B cell (primary cell): ENCODE measurements at regions of chr13 and their contacts with region 1.

Region 1: DNA sequence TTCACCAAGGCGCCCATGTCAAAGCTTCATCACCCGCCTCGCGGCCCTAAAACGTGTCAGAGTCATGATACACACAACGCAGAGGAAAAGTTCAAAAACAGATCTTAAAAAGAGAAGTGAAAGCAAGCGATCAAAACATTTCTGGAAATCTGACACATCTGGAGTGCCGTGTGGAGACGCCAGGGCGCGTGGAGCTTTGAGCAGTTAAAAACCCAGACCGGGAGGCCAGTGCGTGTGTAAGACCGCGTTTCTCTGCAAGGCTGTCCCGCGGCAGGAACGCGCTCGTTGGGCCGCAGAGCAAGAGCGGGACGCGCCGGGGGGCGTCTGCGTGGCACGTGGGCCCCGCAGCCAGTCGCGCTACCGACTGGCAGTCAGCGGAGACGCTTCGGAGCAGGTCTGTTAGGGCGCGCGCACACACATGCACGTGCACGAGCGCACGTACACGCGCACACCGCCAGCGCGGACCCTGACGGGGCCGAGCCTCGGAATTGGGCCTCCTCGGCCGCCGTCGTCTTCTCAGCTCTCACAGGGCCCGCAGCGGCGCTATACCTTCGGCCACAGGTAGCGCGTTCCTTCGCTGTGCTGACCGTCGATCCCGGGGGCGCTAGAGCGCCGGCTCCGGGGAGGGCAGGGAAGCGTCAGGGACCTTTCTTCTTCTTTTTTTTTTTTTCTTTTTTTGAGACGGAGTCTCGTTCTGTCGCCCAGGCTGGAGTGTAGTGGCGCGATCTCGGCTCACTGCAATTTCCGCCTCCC is 35.8 kb downstream of the RNF6 start:
- DNase-seq: peak; percentile 99
- ATAC-seq: peak; percentile 87
- H3K4me3 ChIP-seq: peak overlapping the region; percentile 66 to 91 (median 73)
- H3K4me3 Mint-ChIP-seq: peak overlapping the region; percentile 91
- H3K27ac ChIP-seq: peak overlapping the region; percentile 86 to 88
- H3K27ac Mint-ChIP-seq: peak overlapping the region; percentile 96
- H3K4me1 ChIP-seq: peaks cover 33 to 44% of the 10 kb centered on the region in 2 donors
- H3K4me1 Mint-ChIP-seq: peaks cover 46% of the 10 kb centered on the region
- H3K27me3 ChIP-seq: no peaks in the 10 kb centered on the region
- H3K27me3 Mint-ChIP-seq: no peaks in the 10 kb centered on the region
- CTCF ChIP-seq: peak; percentile 72

Region 2: GRCh38 chr13:25301347-25302047 is 884.8 kb before region 1 on chr13 and contains the start of gene NUP58:
- CTCF ChIA-PET with region 1: no interaction called
- POLR2A ChIA-PET with region 1: no interaction called
- intact Hi-C with region 1: loop called (anchors 5 kb)
- DNase-seq: peak; percentile 97
- ATAC-seq: peak; percentile 99
- H3K4me3 ChIP-seq: peak within 1 kb of the TSS; percentile 69 to 94 (median 86)
- H3K4me3 Mint-ChIP-seq: peak within 1 kb of the TSS; percentile 87
- H3K27ac ChIP-seq: peak within 1 kb of the TSS; percentile 90 to 97
- H3K27ac Mint-ChIP-seq: peak within 1 kb of the TSS; percentile 95
- H3K4me1 ChIP-seq: peaks cover 13 to 17% of the 10 kb centered on the region in 2 donors
- H3K4me1 Mint-ChIP-seq: peaks cover 33% of the 10 kb centered on the region
- H3K27me3 ChIP-seq: peaks cover 0 to 20% (median 15%) of the 10 kb centered on the region in 4 experiments
- H3K27me3 Mint-ChIP-seq: peaks cover 17% of the 10 kb centered on the region
- CTCF ChIP-seq: no peak
- total RNA-seq, gene NUP58: 41.0 and 41.7 TPM in 2 replicates

Region 3: DNA sequence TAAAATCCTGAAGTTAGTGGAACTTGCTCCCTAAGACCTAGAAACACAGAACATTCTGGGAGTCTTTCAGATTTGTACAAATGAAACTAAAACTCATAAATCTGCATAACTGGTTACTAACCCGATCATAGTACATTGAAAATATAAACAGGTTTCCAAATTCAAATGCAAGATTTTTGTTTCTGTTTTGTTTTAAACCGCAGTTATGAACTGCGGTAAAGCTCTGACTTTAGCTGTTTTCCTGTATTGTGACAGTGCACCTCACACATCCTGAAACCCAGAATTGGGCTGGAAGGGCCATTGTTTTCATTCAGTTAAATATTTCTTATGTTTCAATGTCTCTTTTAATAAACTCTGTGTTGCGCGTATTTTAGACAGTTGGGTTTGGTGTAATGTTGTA is 339.1 kb before region 1 on chr13:
- CTCF ChIA-PET with region 1: no interaction called
- POLR2A ChIA-PET with region 1: no interaction called
- intact Hi-C with region 1: no loop called
- DNase-seq: peak; percentile 28
- ATAC-seq: no peak
- H3K4me3 ChIP-seq: no peak overlapping the region
- H3K4me3 Mint-ChIP-seq: no peak overlapping the region
- H3K27ac ChIP-seq: no peak overlapping the region
- H3K27ac Mint-ChIP-seq: no peak overlapping the region
- H3K4me1 ChIP-seq: peaks cover 9 to 26% of the 10 kb centered on the region in 2 donors
- H3K4me1 Mint-ChIP-seq: peaks cover 31% of the 10 kb centered on the region
- H3K27me3 ChIP-seq: peaks cover 0 to 3% (median 0%) of the 10 kb centered on the region in 4 experiments
- H3K27me3 Mint-ChIP-seq: peaks cover under 1% of the 10 kb centered on the region
- CTCF ChIP-seq: no peak

Region 4: DNA sequence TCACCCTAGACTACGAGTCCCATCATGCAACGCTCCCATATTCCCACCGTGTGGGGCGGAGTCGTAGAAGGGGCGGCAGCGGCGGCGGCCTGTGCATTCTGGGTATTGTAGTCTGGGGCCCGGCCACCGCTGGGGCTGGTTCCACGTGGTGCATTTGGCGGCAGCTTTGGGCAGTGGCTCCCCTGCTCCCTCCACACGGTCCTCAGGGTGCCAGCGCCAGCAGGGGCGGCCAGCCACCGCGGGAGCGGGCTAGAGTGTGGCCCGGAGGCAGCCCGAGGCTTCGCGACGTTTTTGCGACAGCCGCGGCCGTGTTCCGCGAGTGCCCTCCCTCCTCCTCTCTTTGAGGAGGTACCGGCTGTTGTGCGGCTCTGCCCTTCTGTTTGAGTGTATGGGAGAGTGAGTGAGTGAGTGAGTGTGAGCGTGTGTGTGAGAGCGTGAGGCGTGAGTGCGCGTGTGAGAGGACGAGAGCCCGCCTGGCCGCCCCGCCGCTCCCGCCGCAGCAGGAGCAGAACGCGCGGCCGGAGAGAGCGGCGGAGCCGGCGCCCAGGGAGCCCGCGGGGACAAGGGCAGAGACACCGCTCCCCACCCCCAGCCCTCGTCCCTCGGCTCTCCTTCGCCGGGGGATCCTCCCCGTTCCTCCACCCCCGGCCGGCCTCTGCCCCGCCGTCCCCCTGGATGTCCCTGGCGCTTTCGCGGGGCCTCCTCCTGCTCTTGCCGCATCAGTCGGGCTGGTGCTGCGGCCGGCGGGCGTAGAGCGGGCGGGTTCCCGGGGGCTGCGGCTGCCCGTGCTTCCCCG is 67.7 kb after region 1 on chr13 and contains the start of gene CDK8:
- CTCF ChIA-PET with region 1: interaction called, 25 read pairs
- POLR2A ChIA-PET with region 1: interaction called, 4 read pairs
- intact Hi-C with region 1: loop called (anchors 1 kb)
- DNase-seq: peak; percentile 97
- ATAC-seq: peak; percentile 86
- H3K4me3 ChIP-seq: peak within 1 kb of the TSS; percentile 66 to 98 (median 77)
- H3K4me3 Mint-ChIP-seq: peak within 1 kb of the TSS; percentile 83
- H3K27ac ChIP-seq: peak within 1 kb of the TSS; percentile 72 to 80
- H3K27ac Mint-ChIP-seq: peak within 1 kb of the TSS; percentile 81
- H3K4me1 ChIP-seq: peaks cover 14 to 17% of the 10 kb centered on the region in 2 donors
- H3K4me1 Mint-ChIP-seq: peaks cover 29% of the 10 kb centered on the region
- H3K27me3 ChIP-seq: peaks cover 0 to 4% (median 2%) of the 10 kb centered on the region in 4 experiments
- H3K27me3 Mint-ChIP-seq: peaks cover 8% of the 10 kb centered on the region
- CTCF ChIP-seq: no peak
- total RNA-seq, gene CDK8: 13.5 TPM in 2 replicates

Region 5: GRCh38 chr13:26498656-26499591 is 312.6 kb after region 1 on chr13:
- CTCF ChIA-PET with region 1: interaction called, 131 read pairs
- POLR2A ChIA-PET with region 1: interaction called, 4 read pairs
- intact Hi-C with region 1: no loop called
- DNase-seq: no peak
- ATAC-seq: no peak
- H3K4me3 ChIP-seq: no peak overlapping the region
- H3K4me3 Mint-ChIP-seq: no peak overlapping the region
- H3K27ac ChIP-seq: no peak overlapping the region
- H3K27ac Mint-ChIP-seq: no peak overlapping the region
- H3K4me1 ChIP-seq: no peaks in the 10 kb centered on the region
- H3K4me1 Mint-ChIP-seq: no peaks in the 10 kb centered on the region
- H3K27me3 ChIP-seq: peaks cover 0 to 3% (median 1%) of the 10 kb centered on the region in 4 experiments
- H3K27me3 Mint-ChIP-seq: peaks cover 10% of the 10 kb centered on the region
- CTCF ChIP-seq: no peak

Region 6: DNA sequence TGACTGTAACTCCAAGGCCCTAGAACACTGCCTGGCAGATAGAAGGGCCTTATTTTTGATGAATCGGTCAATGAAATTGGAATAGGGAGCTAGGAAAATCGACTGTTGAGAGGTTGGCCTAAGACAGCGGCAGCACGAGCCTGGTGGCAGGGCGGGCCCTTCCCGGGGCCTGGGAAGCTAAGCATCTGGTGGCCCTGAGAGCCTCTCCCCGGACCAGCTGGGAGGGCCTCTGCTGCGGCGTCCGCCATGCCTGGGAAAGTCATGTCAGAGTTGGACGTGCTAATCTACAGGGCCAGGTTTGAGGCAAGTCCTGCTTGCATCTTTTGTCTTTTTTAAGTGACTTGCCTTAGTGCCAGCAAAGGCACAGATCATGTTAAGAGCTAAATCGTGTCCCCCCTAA is 585.5 kb after region 1 on chr13:
- CTCF ChIA-PET with region 1: no interaction called
- POLR2A ChIA-PET with region 1: no interaction called
- intact Hi-C with region 1: no loop called
- DNase-seq: no peak
- ATAC-seq: no peak
- H3K4me3 ChIP-seq: no peak overlapping the region
- H3K4me3 Mint-ChIP-seq: no peak overlapping the region
- H3K27ac ChIP-seq: no peak overlapping the region
- H3K27ac Mint-ChIP-seq: no peak overlapping the region
- H3K4me1 ChIP-seq: no peaks in the 10 kb centered on the region
- H3K4me1 Mint-ChIP-seq: no peaks in the 10 kb centered on the region
- H3K27me3 ChIP-seq: no peaks in the 10 kb centered on the region
- H3K27me3 Mint-ChIP-seq: peaks cover 28% of the 10 kb centered on the region
- CTCF ChIP-seq: no peak

Region 7: DNA sequence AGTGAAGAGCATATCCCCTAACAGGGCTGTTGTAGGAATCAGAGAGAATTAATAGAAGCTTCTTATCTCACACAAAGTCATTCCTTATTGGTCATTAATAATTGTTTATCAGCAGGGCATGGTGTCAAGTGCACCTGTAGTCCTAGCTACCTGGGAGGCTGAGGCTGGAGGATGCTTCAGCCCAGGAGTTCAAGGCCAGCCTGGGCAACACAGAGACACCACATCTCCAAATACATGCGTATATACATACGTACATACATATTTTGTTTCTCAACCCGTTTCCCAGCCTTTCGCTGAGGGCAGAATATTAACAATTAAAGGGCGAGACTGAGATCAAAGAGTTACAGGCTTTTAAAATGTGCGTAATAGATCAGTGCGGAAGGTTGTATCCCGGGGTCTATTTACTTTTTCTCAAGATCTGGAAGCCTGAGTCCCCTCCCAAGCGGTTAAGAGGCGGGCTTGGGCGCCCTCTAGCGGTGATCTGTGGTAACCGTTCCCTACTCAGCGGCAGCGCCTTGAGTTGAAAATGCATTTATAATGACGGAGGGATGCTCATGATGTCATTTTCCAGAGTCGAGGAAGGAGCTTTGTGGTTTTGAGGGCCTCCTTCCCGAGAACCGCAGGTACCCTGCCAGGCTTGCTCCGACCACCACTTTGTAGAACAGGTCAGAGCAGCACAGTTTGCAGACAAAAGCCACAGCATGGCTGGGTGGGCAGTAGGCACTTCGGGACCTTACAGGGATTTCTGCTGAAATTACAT is 743.9 kb after region 1 on chr13:
- CTCF ChIA-PET with region 1: interaction called, 5 read pairs
- POLR2A ChIA-PET with region 1: no interaction called
- intact Hi-C with region 1: loop called (anchors 2 kb)
- DNase-seq: peak; percentile 70
- ATAC-seq: peak; percentile 56
- H3K4me3 ChIP-seq: no peak overlapping the region
- H3K4me3 Mint-ChIP-seq: no peak overlapping the region
- H3K27ac ChIP-seq: no peak overlapping the region
- H3K27ac Mint-ChIP-seq: no peak overlapping the region
- H3K4me1 ChIP-seq: peaks cover 3% of the 10 kb centered on the region in 2 donors
- H3K4me1 Mint-ChIP-seq: peaks cover 6% of the 10 kb centered on the region
- H3K27me3 ChIP-seq: peaks cover 0 to 9% (median under 1%) of the 10 kb centered on the region in 4 experiments
- H3K27me3 Mint-ChIP-seq: peaks cover 17% of the 10 kb centered on the region
- CTCF ChIP-seq: peak; percentile 100